Activated T-helper 1 cell treated with anti-CD3 and anti-CD28 coated beads, Interleukin-12 subunit alpha, Interleukin-12 subunit beta, Interleukin-2, Interleukin-4 antibody, amounts not matched to agents 30 ng/mL and 10 ng/mL and 1 ng/mL, durations not matched to agents 14 hours and 24 hours and 36 hours (primary cell): ENCODE measurements at regions of chr17 and their contacts with region 1.

Region 1: DNA sequence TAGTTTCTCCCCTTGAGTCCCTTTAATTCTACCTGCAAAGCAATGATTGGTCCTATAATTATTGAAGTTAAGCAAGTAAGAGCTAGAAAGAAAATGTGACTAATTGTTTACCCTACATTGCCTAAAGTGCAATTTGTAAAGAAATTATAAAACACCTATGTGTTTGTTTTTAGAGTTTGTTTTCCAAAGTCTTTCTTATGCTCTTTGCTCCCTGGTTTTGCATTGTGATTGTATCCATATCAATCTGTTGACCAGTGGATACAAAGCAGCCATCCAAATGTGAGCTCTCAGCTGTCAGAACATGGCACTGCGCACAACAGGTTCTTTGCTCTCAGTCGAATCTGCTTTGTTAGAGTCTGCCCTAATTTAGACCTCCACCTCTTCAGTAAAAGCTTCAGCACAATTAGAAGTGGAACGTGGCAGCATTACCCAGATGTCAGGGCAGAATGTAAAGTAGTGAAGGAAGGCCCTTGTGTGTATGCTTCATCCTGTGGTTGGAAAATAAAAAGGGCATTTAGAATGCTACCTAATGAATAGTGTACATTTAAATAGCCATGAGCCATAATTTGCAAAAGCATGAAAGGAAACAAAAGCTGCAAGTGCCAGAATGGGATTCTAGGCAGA is 70.5 kb downstream of the AATF start:
- DNase-seq: no peak
- H3K4me3 Mint-ChIP-seq: no peak overlapping the region
- H3K27ac Mint-ChIP-seq: no peak overlapping the region
- H3K4me1 Mint-ChIP-seq: peaks cover 5% of the 10 kb centered on the region
- H3K27me3 Mint-ChIP-seq: no peaks in the 10 kb centered on the region

Region 2: GRCh38 chr17:36972186-36972700 is 47.0 kb before region 1 on chr17:
- intact Hi-C with region 1: loop called (anchors 5 kb)
- DNase-seq: no peak
- H3K4me3 Mint-ChIP-seq: no peak overlapping the region
- H3K27ac Mint-ChIP-seq: no peak overlapping the region
- H3K4me1 Mint-ChIP-seq: peaks cover 40% of the 10 kb centered on the region
- H3K27me3 Mint-ChIP-seq: no peaks in the 10 kb centered on the region